Activated naive CD4-positive, alpha-beta T cell treated with anti-CD3 and anti-CD28 coated beads for 36 hours (primary cell): ENCODE measurements at regions of chr11 and their contacts with region 1.

Region 1: GRCh38 chr11:129434641-129435498 is 59.2 kb downstream of the BARX2 start:
- DNase-seq: no peak
- H3K4me3 Mint-ChIP-seq: no peak overlapping the region
- H3K27ac Mint-ChIP-seq: peak overlapping the region; percentile 70
- H3K4me1 Mint-ChIP-seq: peaks cover 28% of the 10 kb centered on the region
- H3K27me3 Mint-ChIP-seq: peaks cover 42% of the 10 kb centered on the region

Region 2: DNA sequence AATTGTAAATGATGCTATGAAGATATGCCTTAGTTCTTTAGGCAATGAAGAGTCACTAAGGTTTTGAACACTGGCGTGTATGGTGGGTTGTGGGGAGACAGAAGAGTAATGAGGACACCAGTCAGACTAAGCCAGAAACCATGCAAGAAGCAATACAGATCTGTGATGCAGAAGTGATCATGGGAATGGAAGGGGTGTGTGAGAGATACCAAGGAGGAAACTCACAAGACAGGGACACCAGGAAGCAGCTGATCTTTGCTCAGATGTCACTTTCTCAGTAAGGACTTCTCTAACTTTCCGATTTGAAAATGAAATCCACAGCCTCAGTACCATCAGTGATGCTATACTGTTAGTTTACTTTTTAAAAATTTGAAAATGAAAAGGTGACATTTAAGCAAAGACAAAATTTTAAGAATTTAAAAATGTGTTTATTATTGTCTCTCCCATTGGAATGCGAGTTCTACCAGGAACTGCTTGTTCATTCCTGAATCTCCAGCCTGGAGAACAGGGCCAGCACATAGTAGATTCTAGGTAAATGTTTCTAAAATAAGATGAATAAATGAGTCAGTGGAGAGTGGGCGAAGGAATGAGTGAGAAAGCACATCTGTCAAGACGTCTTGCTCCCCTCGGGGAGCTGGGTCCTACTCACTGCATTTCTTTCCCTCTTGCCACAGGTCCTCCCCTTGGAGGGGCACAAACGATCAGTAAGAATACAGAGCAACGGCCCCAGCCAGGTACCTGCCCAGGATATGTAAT is 628.2 kb before region 1 on chr11:
- CTCF ChIA-PET with region 1: no interaction called
- intact Hi-C with region 1: no loop called
- DNase-seq: no peak
- H3K4me3 Mint-ChIP-seq: no peak overlapping the region
- H3K27ac Mint-ChIP-seq: no peak overlapping the region
- H3K4me1 Mint-ChIP-seq: peaks cover 22% of the 10 kb centered on the region
- H3K27me3 Mint-ChIP-seq: no peaks in the 10 kb centered on the region

Region 3: GRCh38 chr11:129375751-129376657 is 58.9 kb before region 1 on chr11 and contains the start of gene BARX2:
- CTCF ChIA-PET with region 1: no interaction called
- intact Hi-C with region 1: loop called (anchors 2 kb)
- DNase-seq: peak; percentile 77
- H3K4me3 Mint-ChIP-seq: peak within 1 kb of the TSS; percentile 71
- H3K27ac Mint-ChIP-seq: no peak within 1 kb of the TSS
- H3K4me1 Mint-ChIP-seq: peaks cover 24% of the 10 kb centered on the region
- H3K27me3 Mint-ChIP-seq: peaks cover 70% of the 10 kb centered on the region
- total RNA-seq, gene BARX2: 3.2 to 3.8 TPM

Region 4: DNA sequence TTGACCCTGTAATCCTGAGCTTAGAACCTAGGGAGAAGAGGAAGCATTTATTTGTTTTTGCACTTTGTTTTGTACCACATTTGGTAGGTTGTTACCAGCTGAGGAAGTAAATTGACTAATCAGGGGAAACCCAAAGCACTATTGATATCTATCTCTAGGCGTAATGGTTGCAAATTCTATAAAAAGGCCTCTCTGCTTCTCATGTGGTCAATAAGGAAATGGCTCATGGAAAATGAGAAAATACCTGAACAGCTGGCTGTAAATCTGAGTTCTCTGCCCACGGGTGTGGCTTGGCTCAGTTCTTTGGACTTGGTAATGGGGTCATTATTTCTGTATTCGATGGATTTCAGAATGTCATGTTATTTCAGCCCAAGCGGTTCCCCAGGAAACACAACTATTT is 16.8 kb before region 1 on chr11:
- CTCF ChIA-PET with region 1: no interaction called
- intact Hi-C with region 1: loop called (anchors 2 kb)
- DNase-seq: no peak
- H3K4me3 Mint-ChIP-seq: no peak overlapping the region
- H3K27ac Mint-ChIP-seq: no peak overlapping the region
- H3K4me1 Mint-ChIP-seq: peaks cover 8% of the 10 kb centered on the region
- H3K27me3 Mint-ChIP-seq: no peaks in the 10 kb centered on the region

Region 5: GRCh38 chr11:129447654-129448239 is 12.9 kb after region 1 on chr11:
- CTCF ChIA-PET with region 1: no interaction called
- intact Hi-C with region 1: loop called (anchors 1 kb)
- DNase-seq: no peak
- H3K4me3 Mint-ChIP-seq: no peak overlapping the region
- H3K27ac Mint-ChIP-seq: peak overlapping the region; percentile 65
- H3K4me1 Mint-ChIP-seq: peaks cover 16% of the 10 kb centered on the region
- H3K27me3 Mint-ChIP-seq: no peaks in the 10 kb centered on the region